Common myeloid progenitor, CD34-positive (primary cell): ENCODE measurements at regions of chr6 and their contacts with region 1.

Region 1: DNA sequence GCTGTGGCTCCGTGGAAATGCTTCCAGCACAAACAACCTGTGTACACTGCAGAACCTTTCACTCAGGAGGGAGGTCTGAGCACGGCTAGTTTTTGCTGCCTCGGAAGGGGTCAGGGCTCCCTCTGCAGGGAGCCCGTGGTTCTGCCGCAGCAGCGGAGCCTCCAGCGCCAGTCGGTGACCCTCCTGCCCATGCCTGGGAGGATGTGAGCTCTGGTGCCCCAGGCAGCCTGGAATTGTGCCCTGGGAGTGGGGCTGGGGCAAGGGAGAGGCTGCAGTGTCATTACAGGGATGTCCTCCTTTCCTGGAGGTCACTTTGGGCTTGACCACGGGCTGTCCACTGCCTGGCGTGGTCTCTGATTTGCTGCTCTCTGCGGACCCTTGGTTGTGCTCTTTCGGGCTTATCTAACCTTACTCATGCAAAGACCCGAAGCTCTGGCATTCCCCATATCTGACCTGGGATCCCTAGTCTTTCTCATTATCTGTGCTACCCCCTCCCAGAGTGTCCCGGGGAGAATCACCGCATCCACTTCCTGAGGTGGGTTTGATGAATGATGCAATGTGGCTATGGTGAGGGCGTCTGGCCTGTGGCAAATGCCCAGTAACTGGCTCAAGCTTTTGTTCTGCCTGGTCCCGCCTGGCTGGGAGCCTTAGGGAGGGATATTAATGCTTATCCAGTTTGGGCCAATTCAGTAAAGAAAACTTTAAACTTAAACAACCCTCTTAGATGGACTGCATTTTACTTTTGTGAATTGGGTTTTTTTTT is 59.6 kb upstream of the TAGAP start:
- DNase-seq: peak; percentile 72 to 84 (median 76)
- H3K4me3 ChIP-seq: peak overlapping the region in 1 of 7 experiments; percentile 24
- H3K27ac ChIP-seq: peak overlapping the region in 1 of 2 experiments; percentile 36
- H3K4me1 ChIP-seq: peaks cover 18 to 65% (median 49%) of the 10 kb centered on the region in 4 experiments
- H3K27me3 ChIP-seq: no peaks in the 10 kb centered on the region

Region 2: DNA sequence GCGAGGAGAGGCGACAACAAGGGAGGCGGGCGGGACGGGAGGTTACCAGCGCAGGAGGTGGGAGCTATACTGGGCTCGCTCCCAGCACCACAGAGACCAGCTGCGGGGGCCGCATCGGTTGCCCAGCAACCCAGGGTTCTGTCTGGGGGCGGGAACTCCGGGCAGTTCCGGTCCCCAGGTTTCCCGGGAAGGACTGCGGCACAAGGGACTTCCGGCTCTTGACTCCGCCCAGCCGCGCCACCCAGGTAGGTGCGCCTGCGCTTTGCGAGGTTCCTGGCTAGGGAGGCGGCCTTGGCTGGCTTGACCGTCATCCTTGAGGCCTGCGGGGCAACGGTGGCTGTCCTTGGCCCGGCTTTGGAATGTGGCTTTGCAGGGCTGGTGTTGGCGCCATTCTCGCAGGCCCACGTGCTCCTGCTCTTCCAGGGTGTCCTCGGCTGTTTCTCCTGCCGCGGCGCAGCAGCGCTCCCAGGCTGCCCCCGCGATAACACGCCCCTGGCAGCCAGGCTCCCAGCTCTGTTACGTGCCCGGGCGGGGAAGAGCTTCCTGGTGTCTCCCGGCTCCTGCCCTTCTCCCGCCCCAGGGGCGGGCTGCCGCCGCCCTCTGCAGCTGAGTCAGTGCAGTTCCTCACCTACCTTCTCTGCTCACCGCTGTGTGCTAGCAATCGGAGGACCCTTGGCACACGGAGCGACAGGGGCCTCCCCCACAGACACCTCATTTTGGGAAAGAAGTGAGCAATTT is 104.5 kb before region 1 on chr6 and contains the start of gene RSPH3:
- CTCF ChIA-PET with region 1: interaction called, 230 read pairs
- POLR2A ChIA-PET with region 1: no interaction called
- DNase-seq: peak; percentile 71 to 76 (median 74)
- H3K4me3 ChIP-seq: peak within 1 kb of the TSS; percentile 74 to 96 (median 88)
- H3K27ac ChIP-seq: peak within 1 kb of the TSS; percentile 50 to 84
- H3K4me1 ChIP-seq: peaks cover 4 to 27% (median 20%) of the 10 kb centered on the region in 4 experiments
- H3K27me3 ChIP-seq: no peaks in the 10 kb centered on the region

Region 3: GRCh38 chr6:159017757-159018559 is 86.4 kb before region 1 on chr6:
- CTCF ChIA-PET with region 1: interaction called, 230 read pairs
- POLR2A ChIA-PET with region 1: no interaction called
- DNase-seq: peak in 1 of 3 donors; percentile 17
- H3K4me3 ChIP-seq: peak overlapping the region in 2 of 7 experiments; percentile 10 to 15
- H3K27ac ChIP-seq: peak overlapping the region; percentile 15 to 35
- H3K4me1 ChIP-seq: peaks cover 14 to 27% (median 20%) of the 10 kb centered on the region in 4 experiments
- H3K27me3 ChIP-seq: no peaks in the 10 kb centered on the region

Region 4: DNA sequence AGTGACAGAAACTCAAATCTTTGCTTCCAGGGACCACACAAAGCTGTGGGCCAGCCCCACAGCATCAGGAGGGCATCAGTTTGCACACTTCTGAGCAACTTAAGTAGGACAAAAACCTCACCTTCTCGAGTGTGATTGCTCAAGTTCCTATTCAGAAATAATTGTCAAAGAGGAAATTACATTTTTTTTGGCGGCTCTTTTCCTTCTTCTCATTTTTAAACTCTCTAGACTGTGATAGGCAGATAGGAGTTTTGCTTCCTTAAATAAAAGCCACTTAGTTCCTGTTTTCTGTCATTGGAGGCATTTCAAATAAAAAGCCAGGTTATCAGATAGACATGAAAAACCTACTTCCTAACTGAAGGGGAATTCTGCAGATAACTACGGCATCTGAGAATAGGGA is 48.3 kb before region 1 on chr6:
- CTCF ChIA-PET with region 1: interaction called, 92 read pairs
- POLR2A ChIA-PET with region 1: no interaction called
- DNase-seq: peak; percentile 81 to 88 (median 86)
- H3K4me3 ChIP-seq: peak overlapping the region in 4 of 7 experiments; percentile 4 to 51 (median 36)
- H3K27ac ChIP-seq: no peak overlapping the region
- H3K4me1 ChIP-seq: peaks cover 36 to 67% (median 55%) of the 10 kb centered on the region in 4 experiments
- H3K27me3 ChIP-seq: no peaks in the 10 kb centered on the region

Region 5: GRCh38 chr6:159134701-159135364 is 30.5 kb after region 1 on chr6:
- CTCF ChIA-PET with region 1: interaction called, 122 read pairs
- POLR2A ChIA-PET with region 1: no interaction called
- DNase-seq: peak; percentile 76 to 86 (median 77)
- H3K4me3 ChIP-seq: no peak overlapping the region
- H3K27ac ChIP-seq: no peak overlapping the region
- H3K4me1 ChIP-seq: no peaks in the 10 kb centered on the region
- H3K27me3 ChIP-seq: peaks cover 0 to 7% (median 0%) of the 10 kb centered on the region in 5 experiments

Region 6: DNA sequence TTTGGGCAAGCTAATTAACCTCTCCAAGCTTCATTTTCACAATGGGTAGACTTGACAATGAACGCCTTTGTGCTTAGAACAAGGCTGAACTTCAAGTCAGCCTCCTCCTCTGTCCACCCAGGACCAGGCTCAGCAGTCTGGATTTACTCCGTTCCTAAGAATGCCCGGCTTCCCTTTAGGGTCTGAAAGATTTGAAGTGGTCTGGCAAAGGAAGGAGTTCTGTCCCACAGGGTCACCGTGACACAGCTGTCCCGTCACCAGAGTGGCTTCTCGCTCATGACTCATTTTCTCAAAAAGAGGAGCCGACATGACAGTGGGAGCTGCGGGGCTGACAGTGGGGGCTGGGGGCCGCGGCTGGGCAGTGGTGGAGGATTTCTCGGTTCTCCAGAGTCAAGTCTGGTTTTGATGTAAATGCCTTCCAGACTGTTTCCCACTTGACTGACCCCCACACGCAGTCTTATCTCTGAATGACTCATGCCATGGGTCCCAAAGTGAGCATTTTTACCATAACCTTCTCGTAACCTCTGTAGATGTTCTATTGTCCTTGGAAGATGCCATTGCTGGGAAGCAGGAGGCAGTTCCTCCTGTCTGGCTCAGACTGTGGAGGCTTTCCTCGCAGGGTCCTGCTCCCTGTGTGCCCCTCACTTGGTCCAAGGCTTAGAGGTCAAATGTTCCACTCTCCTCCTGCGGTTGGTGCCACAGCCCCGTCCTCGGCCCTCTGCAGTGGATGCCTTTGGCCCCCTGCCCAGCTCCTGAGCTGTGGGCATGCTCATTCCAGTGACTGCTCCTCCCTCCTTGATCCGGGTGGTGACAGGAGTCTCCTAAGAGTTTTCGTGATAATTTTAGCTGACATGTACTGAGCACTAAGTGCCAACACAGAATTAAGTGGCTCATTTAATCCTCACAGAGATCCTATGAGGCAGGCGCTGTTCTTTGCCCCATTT is 318.0 kb after region 1 on chr6:
- CTCF ChIA-PET with region 1: no interaction called
- POLR2A ChIA-PET with region 1: no interaction called
- DNase-seq: no peak
- H3K4me3 ChIP-seq: no peak overlapping the region
- H3K27ac ChIP-seq: no peak overlapping the region
- H3K4me1 ChIP-seq: no peaks in the 10 kb centered on the region
- H3K27me3 ChIP-seq: peaks cover 0 to 2% (median 0%) of the 10 kb centered on the region in 5 experiments